Posterior cingulate gyrus (tissue), 11 donors: ENCODE measurements at regions of chr6 and their contacts with region 1.

Region 1: GRCh38 chr6:121222656-121223055 is 111.6 kb downstream of the TBC1D32 start:
- DNase-seq: no peak

Region 2: DNA sequence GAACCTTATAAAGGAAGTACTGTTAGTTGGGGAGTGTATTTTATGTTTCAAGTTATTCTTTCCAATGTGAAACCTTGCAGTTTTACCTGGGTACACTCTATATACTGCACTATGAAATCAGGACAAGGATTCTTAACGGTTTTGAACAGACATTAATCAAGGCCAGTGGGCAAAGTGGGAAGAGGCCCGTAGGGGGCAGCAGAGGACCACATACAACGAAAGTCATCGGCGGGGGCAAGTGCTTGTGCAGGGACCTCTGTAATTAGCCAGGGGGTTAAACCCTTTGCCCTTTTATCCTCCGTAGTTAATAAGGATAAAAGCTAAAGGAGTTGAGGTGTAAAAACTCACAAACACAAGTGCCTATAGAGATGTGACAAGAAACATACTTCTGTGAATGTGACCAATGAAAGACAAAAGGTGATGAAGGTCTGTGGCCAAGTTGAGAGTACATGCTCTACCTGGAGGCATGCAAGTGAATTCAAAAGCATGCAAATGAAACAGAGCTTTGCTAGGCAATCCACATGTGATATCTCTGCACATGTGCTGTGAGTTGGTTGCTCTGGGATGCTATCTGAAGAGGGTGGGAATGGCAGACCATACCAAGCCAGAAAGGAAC is 1480.4 kb before region 1 on chr6:
- intact Hi-C with region 1: loop called (anchors 5 kb)
- DNase-seq: peak in 9 of 10 donors; percentile 24 to 90 (median 52)

Region 3: GRCh38 chr6:120759570-120759969 is 463.1 kb before region 1 on chr6:
- intact Hi-C with region 1: no loop called
- DNase-seq: no peak

Region 4: DNA sequence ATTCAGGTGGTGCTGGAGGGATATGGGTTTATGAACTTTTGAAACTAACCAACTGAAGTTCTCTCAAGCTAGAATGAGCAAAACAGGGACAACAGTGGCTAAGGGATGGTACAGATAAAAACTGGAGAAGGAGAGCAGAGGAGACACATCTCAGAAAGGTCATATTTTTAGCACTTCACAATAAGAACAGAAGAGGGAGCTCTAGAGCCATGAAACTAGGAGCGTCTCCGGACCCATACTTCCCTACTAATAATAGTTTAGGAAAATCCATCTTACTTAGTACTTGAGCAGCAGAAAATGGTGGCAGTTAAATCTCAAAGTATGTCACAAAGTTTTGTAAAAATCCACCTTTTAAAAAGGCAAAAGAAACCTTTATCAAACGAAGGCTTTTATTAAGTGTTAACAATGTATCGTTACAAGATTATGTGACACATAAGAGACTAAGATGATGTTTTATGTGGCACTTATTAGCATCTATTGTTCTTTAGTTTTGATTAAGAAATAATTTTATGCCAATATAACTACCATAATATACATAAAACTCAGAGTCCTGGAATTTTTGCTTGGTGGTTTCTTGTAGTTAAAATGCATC is 167.0 kb before region 1 on chr6:
- intact Hi-C with region 1: loop called (anchors 1 kb)
- DNase-seq: no peak